Transverse colon (tissue), 4 donors: ENCODE measurements at regions of chr11 and their contacts with region 1.

Region 1: DNA sequence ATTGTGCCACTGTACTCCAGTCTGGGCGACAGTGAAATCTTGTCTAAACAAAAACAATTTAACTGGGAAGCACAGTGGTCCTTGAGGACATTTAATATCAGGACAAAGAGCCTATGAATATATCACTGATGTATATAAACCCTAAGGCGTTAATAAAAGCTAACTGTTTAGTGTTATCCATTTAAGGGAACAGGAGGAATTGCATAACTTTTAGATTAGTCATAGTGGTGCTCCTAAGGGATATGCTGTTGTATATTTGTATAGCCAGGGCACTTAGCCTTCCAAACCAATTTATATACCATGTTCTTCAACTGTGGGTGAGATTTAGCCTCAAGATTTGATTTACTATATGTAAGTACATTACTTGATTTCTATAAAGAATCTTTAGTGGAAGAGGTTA is 3.0 kb upstream of the CHEK1 start:
- DNase-seq: no peak
- H3K4me3 ChIP-seq: no peak overlapping the region
- H3K27ac ChIP-seq: peak overlapping the region in 2 of 4 donors; percentile 4 to 18
- H3K4me1 ChIP-seq: peaks cover 0 to 17% (median 16%) of the 10 kb centered on the region in 4 donors
- H3K27me3 ChIP-seq: no peaks in the 10 kb centered on the region
- CTCF ChIP-seq: no peak
- EP300 ChIP-seq: no peak
- POLR2A ChIP-seq: no peak

Region 2: DNA sequence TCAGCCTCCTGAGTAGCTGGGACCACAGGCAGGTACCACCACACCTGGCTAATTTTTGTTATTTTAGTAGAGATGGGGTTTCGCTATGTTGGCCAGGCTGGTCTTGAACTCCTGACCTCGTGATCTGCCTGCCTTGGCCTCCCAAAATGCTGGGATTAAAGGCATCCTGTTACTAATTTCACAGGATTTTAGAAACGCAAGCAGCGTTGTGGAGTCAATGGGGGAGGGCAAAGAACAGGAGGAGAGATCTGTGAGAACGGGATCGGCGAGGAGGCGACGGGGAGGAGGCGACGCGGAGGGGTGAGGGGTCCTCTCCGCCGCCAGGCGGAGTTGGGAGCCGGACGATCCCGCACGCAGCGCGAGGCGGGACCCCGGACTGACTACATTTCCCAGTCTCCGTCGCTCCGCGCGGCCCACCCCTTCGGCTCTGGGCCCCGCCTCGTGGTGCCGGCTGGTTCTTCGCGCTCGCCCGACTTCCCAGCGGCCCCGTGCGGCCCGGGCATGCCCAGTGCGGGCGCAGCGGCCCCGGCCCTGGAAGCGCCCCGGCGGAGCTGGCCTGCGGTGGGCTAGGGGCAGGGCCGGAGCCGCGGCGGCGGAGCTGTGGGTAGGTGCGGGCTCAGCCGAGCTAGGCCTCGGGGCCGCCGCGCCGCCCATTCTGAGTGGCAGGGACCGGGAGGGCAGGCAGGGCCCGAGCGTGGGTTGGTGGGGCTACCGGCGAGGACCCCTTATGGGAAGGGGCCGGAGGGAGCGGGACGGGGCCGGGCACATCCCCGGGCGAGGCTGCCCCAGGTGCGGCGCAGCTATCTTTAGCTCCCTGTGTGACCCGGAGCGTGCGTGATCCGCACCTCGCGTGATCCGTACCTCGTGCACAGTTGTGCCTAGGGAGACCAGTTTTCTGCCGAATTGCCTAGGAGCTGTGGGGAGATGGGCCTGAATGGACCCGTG is 52.7 kb before region 1 on chr11 and contains the start of gene EI24:
- in situ Hi-C with region 1: no loop called
- intact Hi-C with region 1: no loop called
- DNase-seq: peak; percentile 93
- H3K4me3 ChIP-seq: peak within 1 kb of the TSS; percentile 75 to 99 (median 87)
- H3K27ac ChIP-seq: peak within 1 kb of the TSS; percentile 87 to 90 (median 88)
- H3K4me1 ChIP-seq: peaks cover 5 to 24% (median 9%) of the 10 kb centered on the region in 4 donors
- H3K27me3 ChIP-seq: no peaks in the 10 kb centered on the region
- CTCF ChIP-seq: peak; percentile 65 to 79 (median 69)
- EP300 ChIP-seq: no peak
- POLR2A ChIP-seq: peak; percentile 31
- total RNA-seq, gene EI24: 53.9 to 107 (median 80.4) TPM

Region 3: GRCh38 chr11:125887373-125888324 is 265.7 kb after region 1 on chr11 and contains the start of gene HYLS1:
- in situ Hi-C with region 1: loop called in 1 of 4 experiments (anchors 25 kb)
- intact Hi-C with region 1: no loop called
- DNase-seq: peak; percentile 94
- H3K4me3 ChIP-seq: peak within 1 kb of the TSS; percentile 64 to 94 (median 80)
- H3K27ac ChIP-seq: peak within 1 kb of the TSS; percentile 93 to 99 (median 98)
- H3K4me1 ChIP-seq: peaks cover 0 to 21% (median 10%) of the 10 kb centered on the region in 4 donors
- H3K27me3 ChIP-seq: no peaks in the 10 kb centered on the region
- CTCF ChIP-seq: peak in 4 of 5 experiments; percentile 11 to 51 (median 30)
- EP300 ChIP-seq: no peak
- POLR2A ChIP-seq: peak; percentile 84
- total RNA-seq, gene HYLS1: 0.80 to 6.4 (median 3.4) TPM in 3 of 4 donors, not detected in the other

Region 4: GRCh38 chr11:126211235-126212088 is 589.5 kb after region 1 on chr11 and contains the starts of genes FAM118B and RPUSD4:
- in situ Hi-C with region 1: loop called in 1 of 4 experiments (anchors 25 kb)
- intact Hi-C with region 1: no loop called
- DNase-seq: peak; percentile 99
- H3K4me3 ChIP-seq: peak within 1 kb of the TSS; percentile 71 to 92 (median 80)
- H3K27ac ChIP-seq: peak within 1 kb of the TSS; percentile 83 to 88 (median 84)
- H3K4me1 ChIP-seq: peaks cover 0 to 44% (median 28%) of the 10 kb centered on the region in 4 donors
- H3K27me3 ChIP-seq: no peaks in the 10 kb centered on the region
- CTCF ChIP-seq: peak in 1 of 5 experiments; percentile 12
- EP300 ChIP-seq: no peak
- POLR2A ChIP-seq: peak; percentile 90
- total RNA-seq, gene FAM118B: 13.7 to 54.5 (median 47.3) TPM
- total RNA-seq, gene RPUSD4: 11.1 to 20.3 (median 12.6) TPM

Region 5: GRCh38 chr11:126612671-126613070 is 990.7 kb after region 1 on chr11:
- in situ Hi-C with region 1: no loop called
- intact Hi-C with region 1: no loop called
- DNase-seq: no peak
- H3K4me3 ChIP-seq: no peak overlapping the region
- H3K27ac ChIP-seq: no peak overlapping the region
- H3K4me1 ChIP-seq: no peaks in the 10 kb centered on the region
- H3K27me3 ChIP-seq: peaks cover 4% of the 10 kb centered on the region
- CTCF ChIP-seq: no peak
- EP300 ChIP-seq: no peak
- POLR2A ChIP-seq: no peak